Activated naive CD4-positive, alpha-beta T cell treated with anti-CD3 and anti-CD28 coated beads for 36 hours (primary cell): ENCODE measurements at regions of chr14 and their contacts with region 1.

Region 1: GRCh38 chr14:31084385-31084784 is 58.2 kb upstream of the STRN3 start:
- DNase-seq: no peak
- H3K4me3 Mint-ChIP-seq: no peak overlapping the region
- H3K27ac Mint-ChIP-seq: no peak overlapping the region
- H3K4me1 Mint-ChIP-seq: no peaks in the 10 kb centered on the region
- H3K27me3 Mint-ChIP-seq: no peaks in the 10 kb centered on the region

Region 2: GRCh38 chr14:30656190-30656632 is 428.2 kb before region 1 on chr14:
- CTCF ChIA-PET with region 1: no interaction called
- intact Hi-C with region 1: loop called (anchors 1 kb)
- DNase-seq: peak; percentile 32
- H3K4me3 Mint-ChIP-seq: no peak overlapping the region
- H3K27ac Mint-ChIP-seq: no peak overlapping the region
- H3K4me1 Mint-ChIP-seq: no peaks in the 10 kb centered on the region
- H3K27me3 Mint-ChIP-seq: no peaks in the 10 kb centered on the region

Region 3: GRCh38 chr14:30874120-30874998 is 210.0 kb before region 1 on chr14 and contains the start of gene COCH:
- CTCF ChIA-PET with region 1: interaction called, 5 read pairs
- intact Hi-C with region 1: loop called (anchors 1 kb)
- DNase-seq: peak; percentile 34
- H3K4me3 Mint-ChIP-seq: peak within 1 kb of the TSS; percentile 78
- H3K27ac Mint-ChIP-seq: no peak within 1 kb of the TSS
- H3K4me1 Mint-ChIP-seq: peaks cover 9% of the 10 kb centered on the region
- H3K27me3 Mint-ChIP-seq: peaks cover 45% of the 10 kb centered on the region
- total RNA-seq, gene COCH: 1.3 TPM

Region 4: GRCh38 chr14:30906752-30907658 is 177.4 kb before region 1 on chr14:
- CTCF ChIA-PET with region 1: no interaction called
- intact Hi-C with region 1: loop called (anchors 1 kb)
- DNase-seq: no peak
- H3K4me3 Mint-ChIP-seq: no peak overlapping the region
- H3K27ac Mint-ChIP-seq: no peak overlapping the region
- H3K4me1 Mint-ChIP-seq: peaks cover 2% of the 10 kb centered on the region
- H3K27me3 Mint-ChIP-seq: no peaks in the 10 kb centered on the region

Region 5: DNA sequence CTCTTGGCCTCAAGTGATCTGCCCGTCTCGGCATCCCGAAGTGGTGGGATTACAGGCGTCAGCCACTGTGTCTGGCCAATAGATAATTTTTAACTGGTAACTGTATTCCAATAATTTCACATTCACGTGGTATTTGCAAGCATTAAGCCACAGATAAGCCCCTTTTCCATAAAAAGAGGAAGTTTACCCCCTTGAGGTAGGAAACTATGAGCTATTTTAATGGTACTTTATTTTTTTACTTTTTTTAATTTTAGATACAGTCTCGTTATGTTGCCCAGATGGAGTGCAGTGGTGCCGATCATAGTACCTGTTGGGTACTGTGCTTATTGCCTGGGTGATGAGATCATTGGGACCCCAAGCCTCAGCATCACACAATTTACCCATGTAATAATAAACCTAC is 101.9 kb before region 1 on chr14:
- CTCF ChIA-PET with region 1: interaction called, 29 read pairs
- intact Hi-C with region 1: loop called (anchors 1 kb)
- DNase-seq: no peak
- H3K4me3 Mint-ChIP-seq: no peak overlapping the region
- H3K27ac Mint-ChIP-seq: no peak overlapping the region
- H3K4me1 Mint-ChIP-seq: peaks cover 16% of the 10 kb centered on the region
- H3K27me3 Mint-ChIP-seq: no peaks in the 10 kb centered on the region